ENCODE measurements at regions of chr1 and their contacts with region 1.

Region 1: DNA sequence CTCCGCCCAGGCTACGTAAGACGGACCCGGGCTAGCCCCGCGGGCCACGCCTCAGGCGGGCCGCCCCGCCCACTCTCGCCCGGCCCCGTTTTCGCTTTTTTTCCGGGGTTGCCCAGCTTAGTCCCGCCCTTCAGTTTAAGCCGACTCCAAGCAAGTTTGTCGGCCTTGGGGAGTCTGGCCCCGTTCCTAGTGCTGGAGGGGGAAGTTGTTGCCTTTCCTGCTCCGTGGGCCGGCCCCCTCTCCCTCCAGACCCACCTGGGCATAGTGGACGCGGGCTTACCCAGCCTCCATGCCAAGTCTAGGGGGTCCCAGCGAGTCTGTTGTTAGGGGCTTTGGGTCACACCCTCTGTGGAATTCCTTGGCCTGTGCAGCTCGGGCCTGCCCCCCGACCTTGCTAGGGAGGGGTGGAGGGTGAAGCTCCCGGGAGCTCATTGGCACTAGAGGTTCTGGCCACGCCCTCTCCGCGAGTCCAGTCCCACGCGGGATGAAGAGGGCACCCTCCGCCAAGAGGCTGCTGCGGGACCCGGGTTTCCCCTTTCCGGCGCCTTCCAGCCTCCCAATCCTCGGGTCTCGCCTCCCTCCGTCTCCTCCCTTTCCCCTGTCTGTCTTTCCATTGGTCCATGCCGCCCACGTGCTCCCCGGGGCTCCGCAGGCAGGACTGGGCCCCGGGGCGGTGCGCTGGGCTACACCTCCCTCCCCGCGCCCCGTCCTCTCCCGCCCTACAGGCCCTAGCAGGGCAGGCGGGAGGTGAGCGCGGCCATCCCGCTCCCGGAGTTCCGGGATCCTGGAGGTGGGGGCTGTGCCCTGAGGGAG is 3.3 kb downstream of the RUSC1 start:
- DNase-seq: peak; percentile 97
- H3K4me3 ChIP-seq: peak overlapping the region; percentile 86 to 88
- H3K27ac ChIP-seq: peak overlapping the region; percentile 95 to 97
- H3K4me1 ChIP-seq: peaks cover 4% of the 10 kb centered on the region
- H3K27me3 ChIP-seq: no peaks in the 10 kb centered on the region
- CTCF ChIP-seq: peak in 1 of 4 experiments; percentile 31
- POLR2A ChIP-seq: peak; percentile 87

Region 2: GRCh38 chr1:154925335-154926170 is 398.5 kb before region 1 on chr1:
- intact Hi-C with region 1: no loop called
- DNase-seq: no peak
- H3K4me3 ChIP-seq: no peak overlapping the region
- H3K27ac ChIP-seq: no peak overlapping the region
- H3K4me1 ChIP-seq: no peaks in the 10 kb centered on the region
- H3K27me3 ChIP-seq: no peaks in the 10 kb centered on the region
- CTCF ChIP-seq: no peak
- POLR2A ChIP-seq: no peak

Region 3: GRCh38 chr1:155236441-155236840 is 87.6 kb before region 1 on chr1:
- intact Hi-C with region 1: no loop called
- DNase-seq: no peak
- H3K4me3 ChIP-seq: no peak overlapping the region
- H3K27ac ChIP-seq: no peak overlapping the region
- H3K4me1 ChIP-seq: no peaks in the 10 kb centered on the region
- H3K27me3 ChIP-seq: no peaks in the 10 kb centered on the region
- CTCF ChIP-seq: no peak
- POLR2A ChIP-seq: no peak

Region 4: DNA sequence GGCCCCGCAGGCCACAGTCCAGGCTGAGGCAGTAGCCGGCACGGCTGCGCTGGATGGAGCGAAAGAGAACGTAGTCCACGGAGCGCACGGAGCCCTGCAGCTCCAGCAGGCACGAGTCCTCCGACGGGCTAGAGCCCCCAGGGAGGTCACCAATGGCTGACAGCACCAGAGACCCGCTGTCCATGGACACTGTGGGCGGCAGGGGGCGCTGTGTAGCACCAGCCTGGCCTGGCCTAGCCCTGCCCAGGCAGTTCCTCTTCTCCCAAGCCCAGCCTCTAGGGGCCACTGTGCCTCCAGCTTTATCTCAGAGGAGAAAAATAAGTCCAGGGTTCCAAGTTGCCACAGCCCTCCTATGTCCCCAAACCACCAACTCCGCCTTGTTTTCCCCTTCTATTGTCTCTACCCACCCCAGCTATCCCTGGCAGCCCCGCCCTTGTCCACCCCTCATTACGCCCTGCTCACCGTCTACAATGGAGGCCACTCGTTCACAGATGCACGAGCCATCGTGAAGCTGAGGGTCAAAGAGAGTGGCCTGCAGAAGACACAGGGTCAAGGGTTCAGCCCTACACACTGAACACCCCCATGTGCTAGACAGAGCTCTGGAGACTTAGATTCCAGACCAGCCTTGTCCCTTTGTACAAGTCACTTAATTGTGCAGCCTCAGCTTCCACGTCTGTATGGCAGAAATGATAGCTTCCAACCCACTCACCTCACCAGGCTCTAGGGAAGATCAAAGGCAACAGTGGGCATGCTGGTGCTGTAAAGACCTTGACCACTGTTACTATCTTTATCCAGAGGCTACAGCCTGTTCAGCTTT is 73.2 kb before region 1 on chr1:
- intact Hi-C with region 1: loop called (anchors 5 kb)
- DNase-seq: peak; percentile 87
- H3K4me3 ChIP-seq: no peak overlapping the region
- H3K27ac ChIP-seq: no peak overlapping the region
- H3K4me1 ChIP-seq: peaks cover 9% of the 10 kb centered on the region
- H3K27me3 ChIP-seq: no peaks in the 10 kb centered on the region
- CTCF ChIP-seq: peak; percentile 94 to 100 (median 98)
- POLR2A ChIP-seq: no peak

Region 5: DNA sequence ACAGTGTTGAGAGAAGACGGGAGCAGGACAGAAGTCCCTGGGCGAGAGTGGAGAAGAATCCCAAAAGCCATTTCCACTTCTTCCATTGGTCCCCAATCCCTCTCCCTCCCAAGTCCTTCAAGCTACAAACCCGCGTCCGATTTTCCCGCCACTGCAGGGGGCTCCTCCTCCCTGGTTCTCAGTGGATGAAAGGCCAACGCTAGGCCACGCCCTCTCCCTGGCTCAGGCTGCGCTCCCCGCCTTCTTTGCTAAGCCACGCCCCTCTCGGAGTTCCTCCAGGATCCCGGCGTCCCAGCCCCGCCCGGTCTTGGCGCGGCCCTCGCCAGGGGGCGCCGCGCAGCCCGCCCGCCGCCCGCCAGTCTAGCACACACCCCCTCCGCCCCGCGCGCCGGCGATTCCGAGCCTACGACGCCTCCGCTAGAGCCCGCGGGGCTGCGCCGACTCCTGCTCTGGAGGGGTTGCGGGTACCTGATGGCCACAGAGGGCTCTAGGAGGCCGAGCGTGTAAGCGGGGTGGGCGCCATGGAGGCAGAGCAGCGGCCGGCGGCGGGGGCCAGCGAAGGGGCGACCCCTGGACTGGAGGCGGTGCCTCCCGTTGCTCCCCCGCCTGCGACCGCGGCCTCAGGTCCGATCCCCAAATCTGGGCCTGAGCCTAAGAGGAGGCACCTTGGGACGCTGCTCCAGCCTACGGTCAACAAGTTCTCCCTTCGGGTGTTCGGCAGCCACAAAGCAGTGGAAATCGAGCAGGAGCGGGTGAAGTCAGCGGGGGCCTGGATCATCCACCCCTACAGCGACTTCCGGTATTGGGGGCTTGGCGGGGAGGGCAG is 46.7 kb before region 1 on chr1 and contains the start of gene HCN3:
- intact Hi-C with region 1: loop called (anchors 2 kb)
- DNase-seq: peak; percentile 97
- H3K4me3 ChIP-seq: peak within 1 kb of the TSS; percentile 56 to 64
- H3K27ac ChIP-seq: peak within 1 kb of the TSS; percentile 76 to 83
- H3K4me1 ChIP-seq: peaks cover 4% of the 10 kb centered on the region
- H3K27me3 ChIP-seq: no peaks in the 10 kb centered on the region
- CTCF ChIP-seq: peak; percentile 74 to 85 (median 78)
- POLR2A ChIP-seq: no peak
- total RNA-seq, gene HCN3: 1.9 to 2.6 TPM

Region 6: DNA sequence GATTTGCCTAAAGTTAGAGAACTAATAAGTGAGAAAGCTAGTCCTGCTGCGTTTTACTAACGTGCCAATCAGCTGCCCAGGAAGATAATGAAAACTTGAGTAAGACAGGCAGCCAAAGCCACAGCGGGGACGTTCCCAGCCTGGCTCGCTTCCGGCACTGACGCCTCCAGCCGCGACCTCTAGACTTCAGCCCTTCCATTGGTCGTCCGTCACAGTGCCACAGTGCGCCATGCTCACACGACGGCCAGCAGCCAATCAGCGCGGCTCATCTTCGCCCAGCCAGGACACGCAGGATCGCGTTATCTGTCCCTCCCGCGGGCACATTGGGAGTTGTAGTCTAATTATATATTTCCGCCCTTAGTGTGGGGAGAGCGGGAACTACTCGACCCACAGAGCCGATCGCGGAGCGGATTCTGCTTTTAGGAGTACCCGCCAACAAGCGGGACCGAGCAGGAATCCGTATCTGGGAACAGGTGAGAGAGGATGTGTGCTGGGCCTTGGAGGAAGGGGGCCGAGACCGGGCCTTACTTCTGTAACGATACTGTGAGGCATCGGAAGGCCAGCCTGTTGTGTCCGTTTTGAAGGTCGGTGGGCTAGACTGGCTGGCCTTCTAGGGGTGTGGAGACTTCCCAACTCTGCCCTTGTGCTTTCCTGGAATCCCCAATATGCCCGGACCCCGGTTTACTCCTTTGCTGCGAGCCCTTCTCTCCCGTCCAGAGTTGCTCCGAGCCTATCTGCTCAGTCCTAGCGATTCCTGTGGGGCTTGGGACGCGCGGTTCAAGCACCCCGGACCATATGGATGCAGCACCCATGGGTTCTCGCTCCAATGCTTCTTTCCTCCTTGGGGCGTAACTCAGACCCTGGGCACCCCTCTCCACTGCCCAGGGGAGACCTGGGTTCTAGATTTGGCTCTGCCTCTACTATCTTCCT is 15.2 kb before region 1 on chr1 and contains the start of gene FDPS:
- intact Hi-C with region 1: loop called (anchors 2 kb)
- DNase-seq: peak; percentile 99
- H3K4me3 ChIP-seq: peak within 1 kb of the TSS; percentile 76 to 79
- H3K27ac ChIP-seq: peak within 1 kb of the TSS; percentile 89 to 92
- H3K4me1 ChIP-seq: peaks cover 5% of the 10 kb centered on the region
- H3K27me3 ChIP-seq: no peaks in the 10 kb centered on the region
- CTCF ChIP-seq: peak in 2 of 4 experiments; percentile 58 to 72
- POLR2A ChIP-seq: peak; percentile 62
- total RNA-seq, gene FDPS: 59.6 to 100 TPM

Region 7: GRCh38 chr1:155504207-155504606 is 180.2 kb after region 1 on chr1:
- intact Hi-C with region 1: loop called (anchors 5 kb)
- DNase-seq: no peak
- H3K4me3 ChIP-seq: no peak overlapping the region
- H3K27ac ChIP-seq: no peak overlapping the region
- H3K4me1 ChIP-seq: no peaks in the 10 kb centered on the region
- H3K27me3 ChIP-seq: no peaks in the 10 kb centered on the region
- CTCF ChIP-seq: peak in 2 of 4 experiments; percentile 49 to 53
- POLR2A ChIP-seq: no peak

Region 8: GRCh38 chr1:155562581-155563376 is 238.8 kb after region 1 on chr1 and contains the start of gene ASH1L:
- intact Hi-C with region 1: loop called (anchors 5 kb)
- DNase-seq: peak; percentile 91
- H3K4me3 ChIP-seq: peak within 1 kb of the TSS; percentile 68 to 92
- H3K27ac ChIP-seq: peak within 1 kb of the TSS; percentile 92 to 98
- H3K4me1 ChIP-seq: no peaks in the 10 kb centered on the region
- H3K27me3 ChIP-seq: no peaks in the 10 kb centered on the region
- CTCF ChIP-seq: peak in 2 of 4 experiments; percentile 37 to 43
- POLR2A ChIP-seq: peak; percentile 83
- total RNA-seq, gene ASH1L: 53.1 to 66.2 TPM

Region 9: DNA sequence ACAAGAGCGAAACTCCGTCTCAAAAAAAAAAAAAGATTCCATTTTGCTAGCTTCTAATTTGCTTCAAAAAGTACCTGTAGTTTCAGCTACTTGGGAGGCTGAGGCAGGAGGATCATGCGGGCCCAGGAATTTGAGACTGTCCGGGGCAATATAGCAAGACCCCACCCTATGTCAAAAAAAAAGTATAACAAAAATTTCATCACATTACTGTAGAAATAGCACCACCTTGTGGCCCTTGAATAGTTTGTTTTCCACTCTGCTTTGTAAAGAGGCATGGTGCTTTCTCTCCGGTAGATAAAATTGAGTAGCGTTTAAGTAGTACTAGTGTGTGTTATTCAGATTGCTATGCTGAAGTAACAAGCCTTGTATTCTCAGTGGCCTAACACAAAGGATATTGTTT is 267.8 kb after region 1 on chr1:
- intact Hi-C with region 1: loop called (anchors 5 kb)
- DNase-seq: peak; percentile 38
- H3K4me3 ChIP-seq: no peak overlapping the region
- H3K27ac ChIP-seq: no peak overlapping the region
- H3K4me1 ChIP-seq: no peaks in the 10 kb centered on the region
- H3K27me3 ChIP-seq: no peaks in the 10 kb centered on the region
- CTCF ChIP-seq: peak; percentile 25 to 68 (median 58)
- POLR2A ChIP-seq: no peak

Measured in prostate gland (tissue), 2 donors.